Activated CD4-positive, alpha-beta T cell treated with anti-CD3 and anti-CD28 coated beads for 36 hours (primary cell): ENCODE measurements at regions of chr14 and their contacts with region 1.

Region 1: DNA sequence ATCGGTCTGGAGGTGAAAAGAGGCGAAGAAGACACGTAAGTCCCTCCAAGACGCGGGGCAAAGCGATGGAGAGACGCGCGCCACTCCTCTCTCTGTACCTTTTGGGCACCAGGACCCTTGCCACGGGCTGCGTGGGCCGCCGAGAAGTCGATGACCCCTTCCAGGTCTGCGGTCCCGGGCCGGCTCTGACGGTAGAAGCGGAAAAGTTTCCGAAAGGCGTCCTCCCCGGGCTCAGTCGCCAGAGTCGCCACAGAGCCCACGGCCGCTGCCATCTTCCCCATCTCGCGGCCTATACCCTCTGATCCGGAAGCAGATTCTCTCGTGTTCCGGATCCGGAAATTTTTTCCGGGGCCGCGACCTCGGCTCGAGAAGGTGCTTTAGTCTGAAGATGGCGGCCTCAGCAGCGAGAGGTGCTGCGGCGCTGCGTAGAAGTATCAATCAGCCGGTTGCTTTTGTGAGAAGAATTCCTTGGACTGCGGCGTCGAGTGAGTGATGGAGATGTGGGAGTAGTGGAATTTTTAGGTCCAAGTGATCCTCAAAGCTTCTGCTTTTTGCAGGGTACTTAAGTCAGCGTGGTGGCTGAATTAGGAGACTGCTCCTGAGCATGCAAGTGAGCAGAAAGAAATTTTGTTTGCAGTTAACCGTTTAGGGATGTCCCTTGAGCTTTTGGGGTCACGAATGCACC is at the starts of genes ALKBH1 and SLIRP:
- DNase-seq: peak; percentile 93
- ATAC-seq: peak; percentile 98
- H3K4me3 Mint-ChIP-seq: peak within 1 kb of the TSS; percentile 95
- H3K27ac Mint-ChIP-seq: peak within 1 kb of the TSS; percentile 94
- H3K4me1 Mint-ChIP-seq: peaks cover 45% of the 10 kb centered on the region
- H3K27me3 Mint-ChIP-seq: no peaks in the 10 kb centered on the region
- total RNA-seq, gene ALKBH1: 16.3 to 16.8 TPM
- total RNA-seq, gene SLIRP: 143 to 156 TPM

Region 2: GRCh38 chr14:77376771-77377501 is 330.9 kb before region 1 on chr14 and contains the starts of genes SAMD15 and TMED8:
- CTCF ChIA-PET with region 1: no interaction called
- POLR2A ChIA-PET with region 1: no interaction called
- intact Hi-C with region 1: loop called in 1 of 2 experiments (anchors 2 kb)
- DNase-seq: peak; percentile 91
- ATAC-seq: peak; percentile 95
- H3K4me3 Mint-ChIP-seq: no peak within 1 kb of the TSS
- H3K27ac Mint-ChIP-seq: peak within 1 kb of the TSS; percentile 86
- H3K4me1 Mint-ChIP-seq: peaks cover 40% of the 10 kb centered on the region
- H3K27me3 Mint-ChIP-seq: no peaks in the 10 kb centered on the region
- total RNA-seq, gene SAMD15: 0.25 TPM
- total RNA-seq, gene TMED8: 25.3 to 27.9 TPM

Region 3: GRCh38 chr14:77554207-77554606 is 153.7 kb before region 1 on chr14:
- CTCF ChIA-PET with region 1: no interaction called
- POLR2A ChIA-PET with region 1: no interaction called
- intact Hi-C with region 1: loop called in 1 of 2 experiments (anchors 1 kb)
- DNase-seq: peak; percentile 33
- ATAC-seq: peak; percentile 63
- H3K4me3 Mint-ChIP-seq: no peak overlapping the region
- H3K27ac Mint-ChIP-seq: peak overlapping the region; percentile 78
- H3K4me1 Mint-ChIP-seq: peaks cover 20% of the 10 kb centered on the region
- H3K27me3 Mint-ChIP-seq: no peaks in the 10 kb centered on the region

Region 4: GRCh38 chr14:77641534-77642341 is 66.1 kb before region 1 on chr14:
- CTCF ChIA-PET with region 1: no interaction called
- POLR2A ChIA-PET with region 1: no interaction called
- intact Hi-C with region 1: loop called in 1 of 2 experiments (anchors 1 kb)
- DNase-seq: peak; percentile 87
- ATAC-seq: peak; percentile 94
- H3K4me3 Mint-ChIP-seq: peak overlapping the region; percentile 72
- H3K27ac Mint-ChIP-seq: peak overlapping the region; percentile 93
- H3K4me1 Mint-ChIP-seq: peaks cover 16% of the 10 kb centered on the region
- H3K27me3 Mint-ChIP-seq: no peaks in the 10 kb centered on the region

Region 5: GRCh38 chr14:77760381-77761246 is 52.7 kb after region 1 on chr14 and contains the start of gene SNW1:
- CTCF ChIA-PET with region 1: no interaction called
- POLR2A ChIA-PET with region 1: interaction called, 5 read pairs
- intact Hi-C with region 1: loop called (anchors 1 kb)
- DNase-seq: peak; percentile 95
- ATAC-seq: peak; percentile 96
- H3K4me3 Mint-ChIP-seq: peak within 1 kb of the TSS; percentile 96
- H3K27ac Mint-ChIP-seq: peak within 1 kb of the TSS; percentile 98
- H3K4me1 Mint-ChIP-seq: peaks cover 33% of the 10 kb centered on the region
- H3K27me3 Mint-ChIP-seq: no peaks in the 10 kb centered on the region
- total RNA-seq, gene SNW1: 134 to 135 TPM

Region 6: DNA sequence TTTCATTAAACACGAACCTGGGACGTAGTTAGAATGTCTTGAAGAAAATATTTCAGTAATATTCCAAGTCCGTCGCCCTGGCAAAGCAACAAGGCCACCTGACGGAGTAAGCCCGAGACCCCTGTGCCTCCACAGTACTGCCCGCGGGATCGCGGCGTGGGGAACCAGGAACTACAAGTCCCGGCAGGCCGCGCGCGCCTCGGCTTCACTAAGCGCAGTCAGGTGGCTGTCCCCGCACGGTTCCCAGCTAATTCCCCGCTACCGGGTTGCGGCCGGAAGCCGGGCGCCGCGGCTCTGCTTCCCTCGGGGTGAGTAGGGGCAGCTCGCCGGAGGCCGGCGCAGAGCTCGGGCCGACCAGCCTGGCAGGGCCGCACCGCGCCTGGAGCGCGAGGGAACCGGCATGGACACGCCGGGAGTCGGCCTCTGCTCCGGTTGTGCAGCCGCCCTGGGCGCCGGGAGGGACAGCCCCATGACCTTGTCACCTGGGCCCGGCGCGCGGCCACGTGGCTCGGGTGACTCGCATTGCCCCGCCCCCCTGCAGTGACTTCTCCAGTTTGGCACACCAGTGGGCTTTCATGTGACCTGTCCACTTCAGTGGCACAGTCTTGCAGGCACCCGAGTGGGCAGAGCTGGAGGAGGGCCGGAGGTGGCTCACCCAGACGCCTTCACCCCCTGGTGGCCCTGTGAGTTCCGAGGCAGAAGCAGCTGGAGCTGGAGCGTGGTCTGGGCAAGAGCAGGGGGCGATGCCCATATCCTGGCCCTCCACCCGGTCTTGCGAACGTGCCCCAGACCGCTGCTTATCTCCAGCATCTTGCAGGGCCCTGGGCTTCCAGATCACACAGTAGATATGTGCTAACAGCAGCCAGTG is 92.2 kb after region 1 on chr14 and contains the start of gene ADCK1:
- CTCF ChIA-PET with region 1: interaction called, 6 read pairs
- POLR2A ChIA-PET with region 1: no interaction called
- intact Hi-C with region 1: loop called (anchors 1 kb)
- DNase-seq: peak; percentile 94
- ATAC-seq: peak; percentile 94
- H3K4me3 Mint-ChIP-seq: peak within 1 kb of the TSS; percentile 83
- H3K27ac Mint-ChIP-seq: peak within 1 kb of the TSS; percentile 87
- H3K4me1 Mint-ChIP-seq: peaks cover 11% of the 10 kb centered on the region
- H3K27me3 Mint-ChIP-seq: no peaks in the 10 kb centered on the region
- total RNA-seq, gene ADCK1: 4.6 to 4.9 TPM